H1 (cell line): ENCODE measurements at regions of chr18 and their contacts with region 1.

Region 1: DNA sequence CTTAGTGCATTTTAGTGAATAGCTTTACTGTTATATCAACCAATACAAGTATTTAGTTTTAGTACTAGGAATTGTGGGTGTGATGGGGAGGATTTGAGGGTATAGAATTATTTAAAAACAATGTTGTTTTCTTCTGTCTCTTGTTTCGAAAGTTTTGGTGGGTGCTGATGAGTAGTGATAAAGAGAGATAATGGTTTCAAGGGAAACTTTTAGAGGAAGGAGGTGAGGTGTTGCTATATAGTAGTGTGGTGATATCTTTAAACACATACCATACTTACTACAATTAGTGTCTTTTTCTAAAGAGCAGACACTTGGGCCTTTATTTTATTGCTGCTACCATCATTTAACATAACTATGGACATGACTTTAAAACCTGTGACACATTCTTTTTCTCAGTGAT is 10.5 kb downstream of the IMPACT start:
- DNase-seq: no peak
- H3K4me3 ChIP-seq: no peak overlapping the region
- H3K27ac ChIP-seq: no peak overlapping the region
- H3K4me1 ChIP-seq: no peaks in the 10 kb centered on the region
- H3K27me3 ChIP-seq: no peaks in the 10 kb centered on the region
- CTCF ChIP-seq: no peak
- EP300 ChIP-seq: no peak
- POLR2A ChIP-seq: no peak
- RAD21 ChIP-seq: no peak

Region 2: DNA sequence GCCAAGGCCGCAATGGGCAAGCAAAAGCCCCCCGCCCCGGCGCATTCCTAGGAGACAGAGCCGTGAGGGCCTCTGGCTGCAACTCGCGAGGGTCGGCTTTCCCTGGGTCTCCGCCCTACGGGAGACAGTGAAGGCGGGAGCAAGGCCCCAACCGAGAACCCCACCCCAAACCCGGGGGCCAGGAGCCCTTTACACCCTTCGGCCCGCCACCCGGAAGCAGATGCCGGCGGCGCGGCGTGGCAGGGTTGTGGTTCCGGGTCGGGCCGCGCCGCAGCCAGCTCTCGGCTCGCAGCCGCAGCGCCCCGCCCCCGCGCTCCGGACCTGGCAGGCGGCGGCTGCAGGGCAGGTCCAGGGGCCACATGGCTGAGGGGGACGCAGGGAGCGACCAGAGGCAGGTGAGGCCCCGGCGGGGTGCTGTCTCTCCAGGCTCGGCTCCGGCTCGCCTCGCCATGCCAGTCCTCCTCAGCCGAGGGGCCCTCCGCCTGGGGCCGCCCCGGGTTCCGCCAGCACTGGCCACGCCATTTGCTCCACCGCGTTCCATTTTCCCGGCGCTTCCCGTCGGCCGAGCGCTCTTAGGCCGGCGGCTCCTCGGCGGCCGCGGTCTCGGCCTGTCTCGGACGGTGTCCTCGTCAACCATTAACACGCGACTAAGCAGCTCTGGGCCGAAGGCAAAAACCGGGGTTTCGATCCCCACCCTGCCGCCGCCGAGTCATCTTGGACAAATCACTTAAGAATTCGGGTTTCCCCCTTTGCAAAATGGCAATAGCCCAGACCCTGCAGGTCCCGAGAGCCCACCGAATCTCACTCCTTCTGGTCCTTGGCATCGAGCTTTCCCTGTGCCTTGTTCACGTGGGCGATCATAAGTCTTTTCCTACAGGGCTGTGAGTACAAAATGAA is 10.3 kb before region 1 on chr18 and contains the start of gene IMPACT:
- CTCF ChIA-PET with region 1: interaction called, 3 read pairs
- POLR2A ChIA-PET with region 1: interaction called, 16 read pairs
- DNase-seq: peak; percentile 81 to 95
- H3K4me3 ChIP-seq: peak within 1 kb of the TSS; percentile 83 to 94 (median 84)
- H3K27ac ChIP-seq: peak within 1 kb of the TSS; percentile 90
- H3K4me1 ChIP-seq: peaks cover 0 to 6% (median 1%) of the 10 kb centered on the region in 4 experiments; a peak in 2 of 7 replicates
- H3K27me3 ChIP-seq: no peaks in the 10 kb centered on the region
- CTCF ChIP-seq: no peak
- EP300 ChIP-seq: peak in 1 of 2 experiments; percentile 84; a peak in 1 of 3 replicates
- POLR2A ChIP-seq: peak; percentile 73 to 98
- RAD21 ChIP-seq: no peak
- total RNA-seq, gene IMPACT: 44.6 and 50.6 TPM in 2 replicates